Endothelial cell of umbilical vein (primary cell): ENCODE measurements at regions of chr7 and their contacts with region 1.

Region 1: DNA sequence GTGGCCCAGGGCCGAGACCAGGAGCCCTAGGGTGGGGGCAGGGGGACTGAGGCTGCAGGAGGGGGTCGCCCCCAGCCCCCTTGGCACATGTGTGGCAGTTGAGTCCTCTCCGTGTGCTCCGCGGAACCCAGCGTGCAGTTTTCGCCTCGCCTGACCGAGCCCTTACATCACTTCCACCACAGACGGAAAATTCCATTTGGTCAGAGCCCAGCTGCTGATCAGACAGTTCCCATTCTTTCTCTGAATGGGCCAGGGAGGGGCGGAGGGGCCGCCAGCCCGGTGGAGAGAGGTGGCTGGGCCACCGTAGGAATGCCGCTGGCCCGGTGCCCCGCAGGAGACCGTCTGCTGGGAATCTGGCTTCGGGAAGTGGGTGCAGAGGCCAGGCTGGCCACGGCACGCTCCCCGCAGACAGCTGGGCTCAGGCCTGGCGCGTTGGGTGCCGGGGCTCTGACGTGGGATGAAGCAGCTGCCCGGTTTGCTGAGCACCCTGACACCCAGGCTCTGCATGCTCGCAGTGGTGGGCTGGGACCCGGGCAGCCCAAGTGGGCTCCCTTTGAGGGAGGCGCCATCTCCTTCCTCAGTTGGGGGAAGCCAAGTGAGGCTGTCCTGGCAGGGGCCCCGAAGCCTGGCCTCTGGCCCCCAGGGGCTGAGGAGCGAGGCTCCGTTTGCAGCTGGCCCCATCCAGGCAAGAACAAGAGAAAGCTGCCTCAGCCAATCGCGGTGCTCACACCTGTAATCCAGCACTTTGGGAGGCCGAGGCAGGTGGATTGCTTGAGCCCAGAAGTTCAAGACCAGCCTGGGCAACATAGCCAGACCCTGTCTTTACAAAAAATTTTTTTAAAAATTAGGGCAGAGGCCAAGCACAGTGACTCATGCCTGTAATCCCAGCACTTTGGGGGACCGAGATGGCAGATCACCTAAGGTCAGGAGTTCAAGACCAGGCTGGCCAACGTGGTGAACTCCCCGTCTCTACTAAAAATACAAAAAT is 9.9 kb downstream of the TTYH3 start:
- DNase-seq: peak; percentile 99
- H3K4me3 ChIP-seq: no peak overlapping the region
- H3K27ac ChIP-seq: peak overlapping the region; percentile 94
- H3K4me1 ChIP-seq: peaks cover 41% of the 10 kb centered on the region
- H3K27me3 ChIP-seq: no peaks in the 10 kb centered on the region
- CTCF ChIP-seq: no peak
- POLR2A ChIP-seq: no peak

Region 2: GRCh38 chr7:2519119-2519930 is 122.4 kb before region 1 on chr7 and contains the start of gene LFNG:
- CTCF ChIA-PET with region 1: no interaction called
- POLR2A ChIA-PET with region 1: no interaction called
- dilution Hi-C with region 1: no loop called
- intact Hi-C with region 1: loop called (anchors 5 kb)
- DNase-seq: peak; percentile 82
- H3K4me3 ChIP-seq: peak within 1 kb of the TSS; percentile 17 to 63 (median 43)
- H3K27ac ChIP-seq: no peak within 1 kb of the TSS
- H3K4me1 ChIP-seq: peaks cover 38% of the 10 kb centered on the region
- H3K27me3 ChIP-seq: no peaks in the 10 kb centered on the region
- CTCF ChIP-seq: no peak
- POLR2A ChIP-seq: peak; percentile 98
- total RNA-seq, gene LFNG: 12.6 and 15.1 TPM in 2 replicates

Region 3: DNA sequence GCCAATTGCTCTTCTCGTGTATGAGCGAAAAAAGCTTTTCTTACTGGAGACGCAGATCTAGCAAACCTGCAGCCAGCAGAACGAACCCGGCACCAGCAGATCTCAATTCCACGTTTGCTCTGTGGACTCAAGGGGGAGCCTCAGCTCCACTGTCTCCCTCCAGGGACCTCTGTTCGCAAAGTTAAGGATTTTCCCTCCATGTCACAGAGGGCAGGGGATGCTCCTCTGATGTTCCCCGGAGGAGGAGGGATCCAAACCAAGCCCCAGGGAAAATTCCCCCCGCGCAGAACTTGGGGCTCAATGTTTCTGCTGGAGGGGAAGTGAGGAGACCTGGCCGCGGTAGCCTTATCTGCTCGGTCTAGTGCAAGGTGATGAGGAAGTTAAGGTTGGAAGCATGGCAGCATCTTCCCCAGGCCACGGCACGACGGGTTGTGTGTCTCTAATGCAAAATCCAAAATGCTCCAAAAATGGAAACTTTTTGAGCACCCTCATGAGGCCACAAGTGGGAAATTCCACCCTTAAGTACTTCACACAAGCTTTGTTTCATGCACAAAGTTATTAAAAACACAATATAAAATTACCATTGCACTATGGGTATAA is 73.9 kb before region 1 on chr7:
- CTCF ChIA-PET with region 1: interaction called, 4 read pairs
- POLR2A ChIA-PET with region 1: no interaction called
- dilution Hi-C with region 1: no loop called
- intact Hi-C with region 1: loop called (anchors 5 kb)
- DNase-seq: no peak
- H3K4me3 ChIP-seq: no peak overlapping the region
- H3K27ac ChIP-seq: no peak overlapping the region
- H3K4me1 ChIP-seq: peaks cover 17% of the 10 kb centered on the region
- H3K27me3 ChIP-seq: no peaks in the 10 kb centered on the region
- CTCF ChIP-seq: peak; percentile 25 to 57
- POLR2A ChIP-seq: no peak

Region 4: GRCh38 chr7:2626498-2627117 is 15.1 kb before region 1 on chr7:
- CTCF ChIA-PET with region 1: interaction called, 5 read pairs
- POLR2A ChIA-PET with region 1: interaction called, 9 read pairs
- dilution Hi-C with region 1: no loop called
- intact Hi-C with region 1: loop called (anchors 2 kb)
- DNase-seq: peak; percentile 87
- H3K4me3 ChIP-seq: no peak overlapping the region
- H3K27ac ChIP-seq: peak overlapping the region; percentile 83
- H3K4me1 ChIP-seq: peaks cover 24% of the 10 kb centered on the region
- H3K27me3 ChIP-seq: no peaks in the 10 kb centered on the region
- CTCF ChIP-seq: no peak
- POLR2A ChIP-seq: peak; percentile 37

Region 5: GRCh38 chr7:2660585-2661408 is 19.1 kb after region 1 on chr7:
- CTCF ChIA-PET with region 1: interaction called, 3 read pairs
- POLR2A ChIA-PET with region 1: no interaction called
- dilution Hi-C with region 1: no loop called
- intact Hi-C with region 1: loop called (anchors 2 kb)
- DNase-seq: no peak
- H3K4me3 ChIP-seq: no peak overlapping the region
- H3K27ac ChIP-seq: no peak overlapping the region
- H3K4me1 ChIP-seq: peaks cover 14% of the 10 kb centered on the region
- H3K27me3 ChIP-seq: no peaks in the 10 kb centered on the region
- CTCF ChIP-seq: peak; percentile 28 to 34
- POLR2A ChIP-seq: no peak